CD8-positive, alpha-beta memory T cell (primary cell): ENCODE measurements at regions of chr10 and their contacts with region 1.

Region 1: GRCh38 chr10:124802313-124802675 is 675 bp downstream of the ABRAXAS2 start:
- DNase-seq: no peak
- H3K4me3 ChIP-seq: peak overlapping the region; percentile 80
- H3K4me3 Mint-ChIP-seq: peak overlapping the region; percentile 87 to 93 (median 90)
- H3K27ac ChIP-seq: peak overlapping the region; percentile 83
- H3K27ac Mint-ChIP-seq: peak overlapping the region; percentile 71 to 93 (median 88)
- H3K4me1 ChIP-seq: peaks cover 10% of the 10 kb centered on the region
- H3K4me1 Mint-ChIP-seq: peaks cover 14 to 32% (median 29%) of the 10 kb centered on the region in 3 donors
- H3K27me3 ChIP-seq: no peaks in the 10 kb centered on the region
- H3K27me3 Mint-ChIP-seq: peaks cover 0 to 8% of the 10 kb centered on the region in 2 donors

Region 2: GRCh38 chr10:124791378-124792348 is 10.6 kb before region 1 on chr10 and contains the start of gene EEF1AKMT2:
- CTCF ChIA-PET with region 1: no interaction called
- POLR2A ChIA-PET with region 1: interaction called, 33 read pairs
- DNase-seq: peak; percentile 64 to 86 (median 81)
- H3K4me3 ChIP-seq: peak within 1 kb of the TSS; percentile 100
- H3K4me3 Mint-ChIP-seq: peak within 1 kb of the TSS; percentile 95 to 99 (median 96)
- H3K27ac ChIP-seq: peak within 1 kb of the TSS; percentile 90
- H3K27ac Mint-ChIP-seq: peak within 1 kb of the TSS; percentile 59 to 98 (median 94)
- H3K4me1 ChIP-seq: peaks cover 13% of the 10 kb centered on the region
- H3K4me1 Mint-ChIP-seq: peaks cover 15 to 28% (median 20%) of the 10 kb centered on the region in 3 donors
- H3K27me3 ChIP-seq: no peaks in the 10 kb centered on the region
- H3K27me3 Mint-ChIP-seq: no peaks in the 10 kb centered on the region
- total RNA-seq, gene EEF1AKMT2: 18.2 to 18.6 TPM

Region 3: GRCh38 chr10:125370578-125370977 is 568.3 kb after region 1 on chr10:
- CTCF ChIA-PET with region 1: no interaction called
- POLR2A ChIA-PET with region 1: no interaction called
- DNase-seq: no peak
- H3K4me3 ChIP-seq: no peak overlapping the region
- H3K4me3 Mint-ChIP-seq: peak overlapping the region in 1 of 7 donors; percentile 33
- H3K27ac ChIP-seq: no peak overlapping the region
- H3K27ac Mint-ChIP-seq: no peak overlapping the region
- H3K4me1 ChIP-seq: no peaks in the 10 kb centered on the region
- H3K4me1 Mint-ChIP-seq: no peaks in the 10 kb centered on the region
- H3K27me3 ChIP-seq: no peaks in the 10 kb centered on the region
- H3K27me3 Mint-ChIP-seq: peaks cover 2 to 6% of the 10 kb centered on the region in 2 donors